ENCODE measurements at regions of chr21 and their contacts with region 1.

Region 1: DNA sequence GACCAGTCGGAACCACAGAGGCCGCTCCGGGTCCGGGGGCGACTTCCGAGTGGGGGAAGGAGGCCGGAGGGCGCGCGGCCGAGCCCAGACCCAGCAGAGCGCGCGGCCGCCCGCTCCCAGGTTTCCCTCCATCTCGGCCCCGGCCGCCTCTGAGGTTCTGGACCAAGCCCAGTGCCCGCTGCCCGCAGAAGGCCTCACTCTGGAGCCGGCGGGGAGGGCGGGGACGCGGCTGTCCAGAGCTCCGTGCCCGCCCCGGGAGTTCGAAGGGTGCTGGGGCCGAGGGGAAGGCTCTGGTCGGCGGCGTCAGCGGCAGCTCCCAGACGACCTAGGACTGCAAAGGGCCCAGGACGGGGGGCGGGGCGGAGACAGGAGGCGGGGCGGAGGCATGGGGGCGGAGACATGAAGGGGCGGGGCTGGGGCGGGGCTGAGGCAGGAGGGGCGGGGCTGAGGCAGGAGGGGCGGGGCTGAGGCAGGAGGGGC is 48.0 kb upstream of the SLC19A1 start:
- H3K4me3 Mint-ChIP-seq: peak overlapping the region; percentile 56
- H3K27ac Mint-ChIP-seq: no peak overlapping the region
- H3K4me1 Mint-ChIP-seq: peaks cover 14% of the 10 kb centered on the region
- H3K27me3 Mint-ChIP-seq: peaks cover 41% of the 10 kb centered on the region

Region 2: GRCh38 chr21:45478115-45478801 is 112.0 kb before region 1 on chr21:
- intact Hi-C with region 1: loop called (anchors 5 kb)
- H3K4me3 Mint-ChIP-seq: peak overlapping the region; percentile 67
- H3K27ac Mint-ChIP-seq: peak overlapping the region; percentile 88
- H3K4me1 Mint-ChIP-seq: peaks cover 57% of the 10 kb centered on the region
- H3K27me3 Mint-ChIP-seq: peaks cover 5% of the 10 kb centered on the region

Region 3: GRCh38 chr21:45643021-45643980 is 53.0 kb after region 1 on chr21 and contains the start of gene PCBP3:
- intact Hi-C with region 1: loop called (anchors 5 kb)
- H3K4me3 Mint-ChIP-seq: peak within 1 kb of the TSS; percentile 71
- H3K27ac Mint-ChIP-seq: no peak within 1 kb of the TSS
- H3K4me1 Mint-ChIP-seq: peaks cover 24% of the 10 kb centered on the region
- H3K27me3 Mint-ChIP-seq: peaks cover 26% of the 10 kb centered on the region